Activated B cell treated with CpG ODN at 0.5 μM for 24 hours (primary cell): ENCODE measurements at regions of chr12 and their contacts with region 1.

Region 1: DNA sequence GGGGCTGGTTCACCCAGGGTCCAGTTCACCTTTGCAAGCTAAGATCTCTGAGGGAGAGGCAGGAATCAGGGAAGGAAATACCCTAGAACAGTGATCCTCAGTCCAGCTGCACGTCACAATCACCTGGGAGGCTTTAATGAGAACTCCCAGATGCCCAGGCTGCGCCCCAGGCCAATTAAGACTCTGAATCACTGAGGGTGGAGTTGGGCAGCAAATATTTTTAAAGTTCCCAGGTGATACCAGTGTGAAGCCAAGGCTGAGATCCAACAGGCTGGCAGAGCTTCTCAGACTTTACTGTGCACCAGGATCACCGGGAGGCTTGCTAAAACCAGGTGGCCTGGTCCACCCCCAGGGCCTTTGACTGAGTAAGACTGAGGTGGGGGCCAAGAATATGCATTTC is 23.8 kb downstream of the MYL2 start:
- DNase-seq: no peak
- ATAC-seq: no peak
- H3K4me3 Mint-ChIP-seq: no peak overlapping the region
- H3K27ac Mint-ChIP-seq: no peak overlapping the region
- H3K4me1 Mint-ChIP-seq: peaks cover 6% of the 10 kb centered on the region
- H3K27me3 Mint-ChIP-seq: no peaks in the 10 kb centered on the region
- CTCF ChIP-seq: no peak

Region 2: DNA sequence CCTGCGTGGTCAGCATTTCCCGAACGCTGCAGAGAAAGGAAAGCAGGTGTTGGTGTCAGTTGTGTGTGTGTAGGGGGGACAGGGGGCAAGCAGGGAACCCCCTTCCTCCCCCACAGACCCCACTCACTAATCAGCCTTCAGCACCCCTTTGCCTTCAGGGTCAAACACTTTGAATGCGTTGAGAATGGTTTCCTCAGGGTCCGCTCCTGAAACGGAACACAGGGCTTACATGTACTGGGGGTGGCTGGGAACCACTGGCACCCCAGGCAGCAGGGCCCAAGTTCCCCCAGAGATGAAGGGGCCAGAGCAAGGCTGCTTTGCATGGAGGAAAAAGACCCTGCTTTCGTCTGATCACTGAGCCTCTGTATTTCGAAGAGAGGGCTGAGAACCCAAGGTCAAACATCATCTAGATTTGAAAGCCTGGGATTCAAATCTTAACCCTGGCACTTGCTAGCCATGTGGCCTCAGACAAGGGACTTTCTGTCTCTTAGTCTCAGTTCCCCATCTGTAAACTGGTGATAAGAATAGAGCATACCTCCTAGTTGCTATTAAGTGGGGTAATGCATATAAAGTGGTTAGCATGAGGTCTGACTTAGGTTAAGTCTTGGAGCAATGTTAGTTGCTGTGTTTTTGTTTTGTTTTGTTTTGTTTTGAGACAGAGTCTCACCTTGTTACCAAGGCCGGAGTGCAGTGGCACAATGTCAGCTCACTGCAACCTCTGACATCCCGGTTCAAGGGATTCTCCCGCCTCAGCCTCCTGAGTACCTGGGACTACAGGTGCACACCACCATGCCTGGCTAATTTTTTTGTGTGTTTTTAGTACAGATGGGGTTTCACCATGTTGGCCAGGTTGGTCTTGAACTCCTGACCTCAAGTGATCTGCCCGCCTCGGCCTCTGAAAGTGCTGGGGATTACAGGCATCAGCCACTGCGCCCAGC is 16.8 kb after region 1 on chr12:
- CTCF ChIA-PET with region 1: interaction called, 3 read pairs
- POLR2A ChIA-PET with region 1: no interaction called
- intact Hi-C with region 1: loop called (anchors 1 kb)
- DNase-seq: peak; percentile 21
- ATAC-seq: peak; percentile 98
- H3K4me3 Mint-ChIP-seq: peak overlapping the region; percentile 51
- H3K27ac Mint-ChIP-seq: peak overlapping the region; percentile 90
- H3K4me1 Mint-ChIP-seq: peaks cover 35% of the 10 kb centered on the region
- H3K27me3 Mint-ChIP-seq: no peaks in the 10 kb centered on the region
- CTCF ChIP-seq: no peak

Region 3: DNA sequence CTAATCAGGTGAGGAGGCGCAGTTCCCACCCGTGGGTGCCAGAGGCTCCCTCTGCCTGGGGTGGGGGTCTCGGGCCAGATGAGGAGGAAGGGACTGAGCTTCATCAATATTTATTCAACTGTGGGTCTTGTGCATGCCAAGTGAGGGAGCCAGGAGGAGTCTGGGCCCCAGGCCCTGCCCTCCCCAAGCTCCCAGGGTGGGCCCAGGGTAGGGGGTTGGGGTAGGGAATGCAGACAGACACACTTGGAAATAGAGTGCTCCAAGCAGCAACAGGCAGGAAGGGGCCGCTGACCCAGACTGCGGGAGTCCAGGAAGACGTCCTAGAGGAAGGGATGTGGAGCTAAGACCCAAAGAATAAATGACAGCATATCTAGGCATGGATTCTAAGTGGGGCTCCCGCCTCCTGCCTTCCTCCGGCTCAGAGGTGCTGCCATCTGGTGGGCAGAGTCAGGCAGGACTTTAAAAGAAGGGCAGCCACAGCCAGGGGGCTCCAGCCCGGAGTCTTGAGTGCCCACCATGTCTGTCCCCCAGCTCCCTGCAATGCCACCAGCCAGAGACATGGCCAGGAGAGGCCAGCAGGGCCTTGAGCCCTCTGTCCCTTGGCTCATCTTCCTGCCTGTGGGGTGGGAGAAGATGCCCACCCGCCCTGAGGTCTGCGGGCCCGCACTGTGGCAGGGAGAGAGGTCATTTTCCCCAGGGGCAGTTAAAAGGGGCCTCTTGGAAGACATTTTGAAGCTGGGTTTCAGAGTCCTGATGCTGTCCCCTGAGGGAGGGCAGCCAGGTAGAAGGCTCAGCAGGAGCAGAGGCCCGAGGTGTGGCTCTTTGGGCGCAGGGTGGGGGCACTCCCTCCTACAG is 402.2 kb after region 1 on chr12:
- CTCF ChIA-PET with region 1: interaction called, 20 read pairs
- POLR2A ChIA-PET with region 1: no interaction called
- intact Hi-C with region 1: loop called (anchors 1 kb)
- DNase-seq: peak; percentile 43
- ATAC-seq: peak; percentile 54
- H3K4me3 Mint-ChIP-seq: no peak overlapping the region
- H3K27ac Mint-ChIP-seq: no peak overlapping the region
- H3K4me1 Mint-ChIP-seq: no peaks in the 10 kb centered on the region
- H3K27me3 Mint-ChIP-seq: peaks cover 2% of the 10 kb centered on the region
- CTCF ChIP-seq: no peak

Region 4: GRCh38 chr12:111313833-111314259 is 417.3 kb after region 1 on chr12:
- CTCF ChIA-PET with region 1: interaction called, 17 read pairs
- POLR2A ChIA-PET with region 1: no interaction called
- intact Hi-C with region 1: loop called (anchors 1 kb)
- DNase-seq: peak; percentile 65
- ATAC-seq: peak; percentile 71
- H3K4me3 Mint-ChIP-seq: no peak overlapping the region
- H3K27ac Mint-ChIP-seq: no peak overlapping the region
- H3K4me1 Mint-ChIP-seq: peaks cover 7% of the 10 kb centered on the region
- H3K27me3 Mint-ChIP-seq: peaks cover 12% of the 10 kb centered on the region
- CTCF ChIP-seq: peak; percentile 57